CD8-positive, alpha-beta memory T cell (primary cell): ENCODE measurements at regions of chr2 and their contacts with region 1.

Region 1: DNA sequence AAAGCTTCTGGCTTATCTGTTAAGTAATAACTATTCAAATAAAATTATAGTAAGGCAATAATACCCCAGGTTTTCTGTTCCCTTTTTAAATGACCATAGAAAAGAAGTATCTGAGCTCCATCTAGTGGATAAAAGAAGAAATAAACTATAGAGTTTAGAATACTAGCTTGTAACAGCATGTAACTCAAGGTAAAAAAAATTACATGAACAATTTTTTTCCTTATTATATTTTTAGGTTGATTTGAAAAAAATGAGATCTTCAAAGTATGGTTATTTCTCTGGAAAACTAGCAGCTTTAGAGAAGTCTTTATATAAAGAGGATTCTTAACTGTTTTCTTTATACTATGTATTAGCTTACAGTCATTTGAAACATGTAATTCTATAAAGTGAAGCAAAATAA is 58.1 kb downstream of the NCKAP1 start:
- DNase-seq: peak in 2 of 5 donors; percentile 14 to 23
- H3K4me3 ChIP-seq: no peak overlapping the region
- H3K4me3 Mint-ChIP-seq: no peak overlapping the region
- H3K27ac ChIP-seq: no peak overlapping the region
- H3K27ac Mint-ChIP-seq: no peak overlapping the region
- H3K4me1 ChIP-seq: no peaks in the 10 kb centered on the region
- H3K4me1 Mint-ChIP-seq: no peaks in the 10 kb centered on the region
- H3K27me3 ChIP-seq: no peaks in the 10 kb centered on the region
- H3K27me3 Mint-ChIP-seq: no peaks in the 10 kb centered on the region

Region 2: DNA sequence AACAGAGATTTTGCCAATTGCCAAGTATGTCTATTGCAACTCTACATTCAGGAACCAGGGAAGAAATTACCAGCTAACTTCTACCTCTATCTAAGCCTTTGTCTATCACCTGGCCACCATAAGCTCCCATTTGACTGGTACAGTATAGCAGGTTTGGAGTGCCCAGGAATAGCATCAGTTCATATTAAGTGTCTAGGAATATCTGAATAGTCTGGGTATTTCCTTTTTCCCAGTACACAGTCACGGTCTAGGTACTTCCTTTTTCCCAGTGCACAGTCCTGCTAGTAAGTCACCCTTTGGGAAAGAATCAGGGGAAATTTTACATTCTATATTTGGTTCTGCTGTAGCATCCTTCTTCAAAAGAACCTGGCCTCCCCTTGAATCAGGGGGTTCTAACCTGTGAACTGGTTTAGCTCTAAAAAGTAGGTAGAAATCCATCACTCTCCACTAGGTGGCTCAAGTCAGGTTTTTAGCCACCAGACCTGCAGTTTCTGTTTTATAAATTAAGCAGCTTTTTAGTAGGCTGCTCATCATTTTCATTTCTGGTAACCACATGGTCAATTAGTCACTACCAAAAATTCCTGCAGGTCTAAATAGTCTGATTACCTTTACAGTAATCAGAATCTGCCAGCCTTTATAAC is 313.3 kb before region 1 on chr2:
- CTCF ChIA-PET with region 1: interaction called, 14 read pairs
- POLR2A ChIA-PET with region 1: no interaction called
- DNase-seq: peak in 2 of 5 donors; percentile 14 to 19
- H3K4me3 ChIP-seq: no peak overlapping the region
- H3K4me3 Mint-ChIP-seq: no peak overlapping the region
- H3K27ac ChIP-seq: no peak overlapping the region
- H3K27ac Mint-ChIP-seq: no peak overlapping the region
- H3K4me1 ChIP-seq: no peaks in the 10 kb centered on the region
- H3K4me1 Mint-ChIP-seq: no peaks in the 10 kb centered on the region
- H3K27me3 ChIP-seq: no peaks in the 10 kb centered on the region
- H3K27me3 Mint-ChIP-seq: no peaks in the 10 kb centered on the region

Region 3: GRCh38 chr2:182962641-182963040 is 17.5 kb before region 1 on chr2:
- CTCF ChIA-PET with region 1: no interaction called
- POLR2A ChIA-PET with region 1: no interaction called
- DNase-seq: no peak
- H3K4me3 ChIP-seq: no peak overlapping the region
- H3K4me3 Mint-ChIP-seq: no peak overlapping the region
- H3K27ac ChIP-seq: no peak overlapping the region
- H3K27ac Mint-ChIP-seq: no peak overlapping the region
- H3K4me1 ChIP-seq: no peaks in the 10 kb centered on the region
- H3K4me1 Mint-ChIP-seq: no peaks in the 10 kb centered on the region
- H3K27me3 ChIP-seq: no peaks in the 10 kb centered on the region
- H3K27me3 Mint-ChIP-seq: no peaks in the 10 kb centered on the region

Region 4: GRCh38 chr2:183093857-183094657 is 113.9 kb after region 1 on chr2:
- CTCF ChIA-PET with region 1: no interaction called
- POLR2A ChIA-PET with region 1: no interaction called
- DNase-seq: no peak
- H3K4me3 ChIP-seq: no peak overlapping the region
- H3K4me3 Mint-ChIP-seq: no peak overlapping the region
- H3K27ac ChIP-seq: no peak overlapping the region
- H3K27ac Mint-ChIP-seq: no peak overlapping the region
- H3K4me1 ChIP-seq: no peaks in the 10 kb centered on the region
- H3K4me1 Mint-ChIP-seq: no peaks in the 10 kb centered on the region
- H3K27me3 ChIP-seq: no peaks in the 10 kb centered on the region
- H3K27me3 Mint-ChIP-seq: no peaks in the 10 kb centered on the region